Mammary epithelial cell (primary cell): ENCODE measurements at regions of chr4 and their contacts with region 1.

Region 1: DNA sequence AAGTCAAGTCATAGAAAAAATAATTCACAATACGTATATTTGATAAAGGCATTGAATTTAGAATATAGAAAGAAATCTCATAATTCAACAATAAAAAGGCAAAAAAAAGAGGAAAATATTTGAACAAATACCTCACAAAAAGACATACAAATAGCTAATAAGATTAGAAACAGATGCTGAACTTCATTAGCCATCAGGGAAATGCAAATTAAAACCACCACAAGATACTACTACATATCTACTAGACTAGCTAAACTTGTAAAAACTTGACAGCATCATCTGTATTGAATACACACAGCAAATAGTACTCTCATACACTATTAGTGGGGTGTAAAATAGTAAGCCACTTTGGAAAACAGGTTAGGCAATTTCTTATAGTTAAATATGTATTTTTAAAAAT is 128.7 kb upstream of the TLL1 start:
- DNase-seq: no peak
- H3K4me3 ChIP-seq: no peak overlapping the region
- H3K27ac ChIP-seq: no peak overlapping the region
- H3K4me1 ChIP-seq: peaks cover 10% of the 10 kb centered on the region
- H3K27me3 ChIP-seq: no peaks in the 10 kb centered on the region
- CTCF ChIP-seq: no peak

Region 2: GRCh38 chr4:165079476-165079875 is 664.9 kb before region 1 on chr4:
- CTCF ChIA-PET with region 1: no interaction called
- dilution Hi-C with region 1: no loop called
- in situ Hi-C with region 1: no loop called
- intact Hi-C with region 1: no loop called
- DNase-seq: peak; percentile 5
- H3K4me3 ChIP-seq: no peak overlapping the region
- H3K27ac ChIP-seq: no peak overlapping the region
- H3K4me1 ChIP-seq: no peaks in the 10 kb centered on the region
- H3K27me3 ChIP-seq: no peaks in the 10 kb centered on the region
- CTCF ChIP-seq: no peak

Region 3: GRCh38 chr4:165700855-165701254 is 43.5 kb before region 1 on chr4:
- CTCF ChIA-PET with region 1: interaction called, 18 read pairs
- dilution Hi-C with region 1: no loop called
- in situ Hi-C with region 1: no loop called
- intact Hi-C with region 1: no loop called
- DNase-seq: no peak
- H3K4me3 ChIP-seq: no peak overlapping the region
- H3K27ac ChIP-seq: no peak overlapping the region
- H3K4me1 ChIP-seq: no peaks in the 10 kb centered on the region
- H3K27me3 ChIP-seq: no peaks in the 10 kb centered on the region
- CTCF ChIP-seq: peak; percentile 33 to 64

Region 4: DNA sequence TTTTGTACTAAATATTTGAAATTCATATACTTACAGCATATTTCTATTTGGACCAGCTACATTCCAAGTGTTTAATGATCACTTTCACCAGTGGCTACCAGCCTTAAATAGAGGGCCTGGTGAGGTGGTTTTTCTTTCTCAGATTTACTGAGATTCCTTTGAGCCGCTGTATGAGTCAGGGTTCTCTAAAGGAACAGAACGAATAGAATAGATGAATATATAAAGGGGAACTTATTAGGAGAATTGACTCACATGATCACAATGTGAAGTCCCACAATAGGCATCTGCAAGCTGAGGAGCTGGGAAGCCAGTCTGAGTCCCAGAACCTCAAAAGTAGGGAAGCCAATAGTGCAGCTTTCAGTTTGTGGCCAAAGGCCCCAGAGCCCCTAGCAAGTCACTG is 17.5 kb before region 1 on chr4:
- CTCF ChIA-PET with region 1: no interaction called
- dilution Hi-C with region 1: no loop called
- in situ Hi-C with region 1: no loop called
- intact Hi-C with region 1: no loop called
- DNase-seq: peak; percentile 72
- H3K4me3 ChIP-seq: no peak overlapping the region
- H3K27ac ChIP-seq: no peak overlapping the region
- H3K4me1 ChIP-seq: no peaks in the 10 kb centered on the region
- H3K27me3 ChIP-seq: no peaks in the 10 kb centered on the region
- CTCF ChIP-seq: no peak

Region 5: GRCh38 chr4:165814256-165815010 is 70.1 kb after region 1 on chr4:
- CTCF ChIA-PET with region 1: no interaction called
- dilution Hi-C with region 1: no loop called
- in situ Hi-C with region 1: no loop called
- intact Hi-C with region 1: no loop called
- DNase-seq: peak; percentile 69
- H3K4me3 ChIP-seq: no peak overlapping the region
- H3K27ac ChIP-seq: peak overlapping the region; percentile 64
- H3K4me1 ChIP-seq: peaks cover 13% of the 10 kb centered on the region
- H3K27me3 ChIP-seq: no peaks in the 10 kb centered on the region
- CTCF ChIP-seq: no peak

Region 6: GRCh38 chr4:165944900-165945299 is 200.5 kb after region 1 on chr4:
- CTCF ChIA-PET with region 1: no interaction called
- dilution Hi-C with region 1: no loop called
- in situ Hi-C with region 1: no loop called
- intact Hi-C with region 1: no loop called
- DNase-seq: no peak
- H3K4me3 ChIP-seq: no peak overlapping the region
- H3K27ac ChIP-seq: no peak overlapping the region
- H3K4me1 ChIP-seq: no peaks in the 10 kb centered on the region
- H3K27me3 ChIP-seq: no peaks in the 10 kb centered on the region
- CTCF ChIP-seq: no peak